ENCODE measurements at regions of chr19 and their contacts with region 1.

Region 1: GRCh38 chr19:35417713-35418534 is 30.1 kb upstream of the FFAR2 start:
- DNase-seq: peak; percentile 88
- ATAC-seq: peak; percentile 63
- H3K4me3 ChIP-seq: no peak overlapping the region; the same call in 1 of the 2 replicates
- H3K27ac ChIP-seq: peak overlapping the region; percentile 68
- H3K4me1 ChIP-seq: peaks cover 41% of the 10 kb centered on the region
- H3K27me3 ChIP-seq: no peaks in the 10 kb centered on the region
- CTCF ChIP-seq: no peak
- EP300 ChIP-seq: peak; percentile 55 to 60; a peak in 2 of 4 replicates
- POLR2A ChIP-seq: no peak
- RAD21 ChIP-seq: peak; percentile 15; the same call in 1 of the 2 replicates

Region 2: GRCh38 chr19:35228177-35228930 is 189.6 kb before region 1 on chr19 and contains the start of gene FAM187B:
- CTCF ChIA-PET with region 1: no interaction called
- POLR2A ChIA-PET with region 1: no interaction called
- RAD21 ChIA-PET with region 1: no interaction called
- SMC1A ChIA-PET with region 1: no interaction called
- in situ Hi-C with region 1: no loop called
- intact Hi-C with region 1: no loop called
- DNase-seq: no peak
- ATAC-seq: no peak
- H3K4me3 ChIP-seq: no peak within 1 kb of the TSS
- H3K27ac ChIP-seq: no peak within 1 kb of the TSS
- H3K4me1 ChIP-seq: no peaks in the 10 kb centered on the region
- H3K27me3 ChIP-seq: 0 out of 4 replicates have a peak, but pooled peaks cover 0 to 2% of the 10 kb centered on the region in 2 experiments
- CTCF ChIP-seq: no peak
- EP300 ChIP-seq: no peak
- POLR2A ChIP-seq: no peak
- RAD21 ChIP-seq: no peak
- polyA plus RNA-seq, gene FAM187B: not detected

Region 3: DNA sequence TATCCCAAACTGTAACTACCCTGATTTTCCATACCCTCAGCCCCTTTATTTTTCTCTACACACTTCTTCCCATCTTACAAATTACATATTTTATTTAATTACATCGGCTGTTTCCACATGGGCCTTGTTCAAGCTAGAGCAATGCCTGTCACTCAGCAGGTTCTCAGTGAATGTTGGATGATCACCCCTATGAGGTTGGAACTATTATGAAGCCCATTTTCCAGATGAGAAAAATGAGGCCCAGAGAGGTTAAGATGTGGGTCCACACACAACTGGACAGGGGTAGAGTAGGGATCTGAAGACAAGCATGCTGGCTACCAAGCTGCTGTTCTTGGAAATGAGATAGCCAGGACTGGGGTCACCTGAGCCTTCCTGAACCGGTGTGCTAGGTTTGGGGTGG is 116.0 kb before region 1 on chr19:
- CTCF ChIA-PET with region 1: no interaction called
- POLR2A ChIA-PET with region 1: no interaction called
- RAD21 ChIA-PET with region 1: no interaction called
- SMC1A ChIA-PET with region 1: no interaction called
- in situ Hi-C with region 1: no loop called
- intact Hi-C with region 1: no loop called
- DNase-seq: no peak
- ATAC-seq: no peak
- H3K4me3 ChIP-seq: no peak overlapping the region
- H3K27ac ChIP-seq: no peak overlapping the region
- H3K4me1 ChIP-seq: peaks cover 11% of the 10 kb centered on the region
- H3K27me3 ChIP-seq: no peaks in the 10 kb centered on the region
- CTCF ChIP-seq: no peak
- EP300 ChIP-seq: no peak
- POLR2A ChIP-seq: no peak
- RAD21 ChIP-seq: no peak

Region 4: DNA sequence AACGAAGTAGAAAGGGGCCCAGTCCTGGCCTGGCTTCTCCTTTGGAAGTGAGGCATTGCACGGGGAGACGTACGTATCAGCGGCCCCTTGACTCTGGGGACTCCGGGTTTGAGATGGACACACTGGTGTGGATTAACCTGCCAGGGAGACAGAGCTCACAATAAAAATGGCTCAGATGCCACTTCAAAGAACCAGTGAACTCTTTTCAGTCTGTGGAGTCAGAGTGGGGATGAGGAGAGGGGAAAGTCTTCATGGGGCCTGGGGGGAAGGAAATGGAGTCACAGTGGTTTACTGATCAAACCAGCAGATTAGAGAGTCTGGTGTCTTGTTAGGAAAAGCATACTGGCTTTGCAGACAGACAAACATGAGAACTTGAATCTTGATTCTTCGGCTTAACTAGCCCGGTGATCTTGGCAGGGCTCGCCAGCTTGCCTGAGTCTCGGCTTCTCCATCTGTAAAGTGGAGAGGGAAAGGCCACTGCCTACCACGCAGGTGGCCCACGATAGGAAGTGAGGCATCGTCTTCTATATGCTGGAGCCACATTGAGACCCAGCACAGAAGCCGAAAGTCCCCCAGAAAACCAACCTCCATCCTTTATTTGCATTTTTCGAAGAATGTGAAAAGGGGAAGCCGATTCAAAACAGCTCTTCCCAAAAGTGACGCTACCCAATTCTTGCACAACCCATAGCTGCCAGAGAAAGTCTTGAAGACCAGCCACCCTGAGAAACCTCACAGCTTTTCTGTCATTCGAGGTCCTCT is 70.6 kb before region 1 on chr19 and contains the start of gene FFAR1:
- CTCF ChIA-PET with region 1: interaction called, 51 read pairs
- POLR2A ChIA-PET with region 1: interaction called, 30 read pairs
- RAD21 ChIA-PET with region 1: interaction called, 80 read pairs
- SMC1A ChIA-PET with region 1: interaction called, 86 read pairs
- in situ Hi-C with region 1: no loop called
- intact Hi-C with region 1: loop called (anchors 2 kb)
- DNase-seq: peak; percentile 96
- ATAC-seq: peak; percentile 74
- H3K4me3 ChIP-seq: no peak within 1 kb of the TSS; the same call in 1 of the 2 replicates
- H3K27ac ChIP-seq: peak within 1 kb of the TSS; percentile 97
- H3K4me1 ChIP-seq: peaks cover 56% of the 10 kb centered on the region
- H3K27me3 ChIP-seq: no peaks in the 10 kb centered on the region
- CTCF ChIP-seq: no peak
- EP300 ChIP-seq: peak in 1 of 2 experiments; percentile 66; a peak in 2 of 4 replicates
- POLR2A ChIP-seq: peak; percentile 72
- RAD21 ChIP-seq: no peak
- polyA plus RNA-seq, gene FFAR1: 0.05 to 0.07 TPM

Region 5: DNA sequence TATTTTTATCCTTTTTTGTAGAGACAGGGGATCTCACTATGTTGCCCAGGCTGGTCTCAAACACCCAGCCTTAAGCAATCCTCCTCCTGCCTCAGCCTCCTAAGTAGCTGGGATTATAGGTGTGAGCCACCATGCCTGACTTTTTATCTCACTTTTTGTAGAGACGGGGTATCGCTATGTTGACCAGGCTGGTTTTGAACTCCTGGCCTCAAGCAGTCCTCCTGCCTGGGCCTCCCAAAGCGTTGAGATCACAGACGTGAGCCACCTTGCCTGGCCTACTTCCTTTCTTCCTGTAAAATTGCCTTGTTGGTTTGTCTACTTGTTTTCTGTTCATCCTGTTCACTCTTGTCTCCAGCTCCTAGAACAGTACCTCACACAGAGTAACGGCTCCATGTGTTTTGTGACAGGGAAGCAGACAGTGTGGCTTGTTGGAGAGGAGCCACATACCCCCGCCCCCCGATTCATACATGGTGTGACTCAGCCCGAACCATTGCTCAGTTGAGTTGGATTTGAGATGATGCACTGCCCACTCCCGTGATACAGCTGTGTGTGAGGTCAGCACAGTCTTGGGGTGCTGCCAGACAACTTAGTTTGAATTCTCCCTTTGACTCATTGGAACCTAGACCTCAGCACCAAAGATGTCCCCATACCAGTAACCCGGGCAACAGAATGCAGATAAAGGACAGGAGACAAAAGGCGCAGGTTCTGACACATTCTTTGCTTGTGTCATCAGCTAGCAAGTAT is 12.9 kb before region 1 on chr19:
- CTCF ChIA-PET with region 1: interaction called, 24 read pairs
- POLR2A ChIA-PET with region 1: interaction called, 67 read pairs
- RAD21 ChIA-PET with region 1: interaction called, 84 read pairs
- SMC1A ChIA-PET with region 1: interaction called, 152 read pairs
- in situ Hi-C with region 1: no loop called
- intact Hi-C with region 1: no loop called
- DNase-seq: peak; percentile 95
- ATAC-seq: peak; percentile 80
- H3K4me3 ChIP-seq: no peak overlapping the region
- H3K27ac ChIP-seq: peak overlapping the region; percentile 79
- H3K4me1 ChIP-seq: peaks cover 57% of the 10 kb centered on the region
- H3K27me3 ChIP-seq: no peaks in the 10 kb centered on the region
- CTCF ChIP-seq: no peak
- EP300 ChIP-seq: peak; percentile 90
- POLR2A ChIP-seq: no peak
- RAD21 ChIP-seq: no peak

Region 6: GRCh38 chr19:35449053-35449687 is 31.2 kb after region 1 on chr19:
- CTCF ChIA-PET with region 1: interaction called, 5 read pairs
- POLR2A ChIA-PET with region 1: interaction called, 7 read pairs
- RAD21 ChIA-PET with region 1: interaction called, 45 read pairs
- SMC1A ChIA-PET with region 1: interaction called, 237 read pairs
- in situ Hi-C with region 1: no loop called
- intact Hi-C with region 1: no loop called
- DNase-seq: no peak
- ATAC-seq: no peak
- H3K4me3 ChIP-seq: 0 out of 2 replicates have a peak overlapping the region, but pooled peaks have one; percentile 4
- H3K27ac ChIP-seq: no peak overlapping the region
- H3K4me1 ChIP-seq: peaks cover 56% of the 10 kb centered on the region
- H3K27me3 ChIP-seq: no peaks in the 10 kb centered on the region
- CTCF ChIP-seq: no peak
- EP300 ChIP-seq: no peak
- POLR2A ChIP-seq: no peak
- RAD21 ChIP-seq: no peak

Region 7: DNA sequence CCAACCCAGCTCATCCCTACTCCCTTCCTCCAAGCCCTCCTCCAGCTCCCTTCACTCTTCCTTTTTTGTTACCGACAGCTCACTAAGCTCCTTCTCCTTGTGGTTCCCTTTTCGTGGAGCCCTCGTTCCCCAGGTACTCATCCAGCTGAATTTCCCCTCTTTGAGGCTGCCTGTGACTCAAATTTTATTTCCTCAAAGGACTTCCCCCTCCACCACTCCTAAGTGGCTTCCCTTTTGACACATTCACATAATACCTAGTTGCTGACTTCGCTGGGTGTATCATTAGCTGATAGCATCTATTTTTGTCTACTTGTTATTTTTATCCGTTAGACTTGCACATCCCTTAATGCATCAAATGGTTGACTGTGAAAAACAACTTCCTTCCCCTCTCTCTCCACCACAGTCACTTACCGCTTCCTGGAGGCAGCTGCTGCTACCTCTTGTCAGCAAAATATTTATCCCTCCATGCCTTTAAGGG is 44.6 kb after region 1 on chr19:
- CTCF ChIA-PET with region 1: interaction called, 86 read pairs
- POLR2A ChIA-PET with region 1: interaction called, 37 read pairs
- RAD21 ChIA-PET with region 1: interaction called, 110 read pairs
- SMC1A ChIA-PET with region 1: interaction called, 237 read pairs
- in situ Hi-C with region 1: no loop called
- intact Hi-C with region 1: no loop called
- DNase-seq: peak; percentile 96
- ATAC-seq: peak; percentile 79
- H3K4me3 ChIP-seq: peak overlapping the region; percentile 33; the same call in 1 of the 2 replicates
- H3K27ac ChIP-seq: peak overlapping the region; percentile 73
- H3K4me1 ChIP-seq: peaks cover 56% of the 10 kb centered on the region
- H3K27me3 ChIP-seq: no peaks in the 10 kb centered on the region
- CTCF ChIP-seq: peak in 1 of 3 experiments; percentile 42; a peak in 2 of 6 replicates
- EP300 ChIP-seq: peak; percentile 92 to 97
- POLR2A ChIP-seq: no peak
- RAD21 ChIP-seq: peak; percentile 65

Region 8: GRCh38 chr19:35612559-35613321 is 194.8 kb after region 1 on chr19 and contains the start of gene HAUS5:
- CTCF ChIA-PET with region 1: no interaction called
- POLR2A ChIA-PET with region 1: no interaction called
- RAD21 ChIA-PET with region 1: no interaction called
- SMC1A ChIA-PET with region 1: no interaction called
- in situ Hi-C with region 1: no loop called
- intact Hi-C with region 1: no loop called
- DNase-seq: peak; percentile 70
- ATAC-seq: peak; percentile 92
- H3K4me3 ChIP-seq: peak within 1 kb of the TSS; percentile 74
- H3K27ac ChIP-seq: peak within 1 kb of the TSS; percentile 81
- H3K4me1 ChIP-seq: peaks cover 17% of the 10 kb centered on the region
- H3K27me3 ChIP-seq: no peaks in the 10 kb centered on the region
- CTCF ChIP-seq: peak in 1 of 3 experiments; percentile 24; a peak in 1 of 6 replicates
- EP300 ChIP-seq: peak in 1 of 2 experiments; percentile 57; a peak in 1 of 4 replicates
- POLR2A ChIP-seq: peak; percentile 91
- RAD21 ChIP-seq: no peak
- polyA plus RNA-seq, gene HAUS5: 3.1 to 3.6 TPM

Measured in GM12878 (cell line).